CD8-positive, alpha-beta memory T cell (primary cell): ENCODE measurements at regions of chr20 and their contacts with region 1.

Region 1: DNA sequence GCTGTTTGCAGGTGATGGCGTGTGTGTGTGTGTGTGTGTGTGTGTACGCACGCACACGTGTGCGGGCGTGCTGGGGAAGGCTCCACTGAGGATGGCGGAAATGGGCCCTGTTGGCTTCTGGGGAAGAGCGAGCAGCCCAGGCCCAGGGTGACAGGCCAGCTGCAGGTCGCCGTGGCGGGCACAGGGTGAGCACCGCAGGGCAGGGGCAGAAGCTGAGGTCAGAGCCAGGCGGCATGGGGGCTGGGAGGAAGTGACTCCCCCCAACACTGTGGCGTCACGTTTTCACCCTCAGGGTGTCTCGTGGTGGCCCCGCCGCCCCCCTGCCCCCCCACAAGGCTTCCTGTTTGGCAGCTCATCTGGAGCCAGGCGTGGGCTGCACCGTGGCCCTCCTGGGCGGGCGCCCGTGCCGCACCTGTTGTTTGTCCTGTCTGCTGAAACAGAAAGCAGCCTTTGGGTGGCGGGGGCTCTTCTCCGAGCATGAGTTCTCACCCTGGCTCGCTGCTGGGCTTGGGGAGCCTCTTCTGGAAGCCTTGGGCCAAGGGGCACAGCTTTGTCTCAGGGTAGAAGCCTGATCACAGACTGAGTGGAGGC is 7.1 kb downstream of the RBM38 start:
- DNase-seq: peak; percentile 86 to 97 (median 96)
- H3K4me3 ChIP-seq: peak overlapping the region; percentile 56
- H3K4me3 Mint-ChIP-seq: peak overlapping the region; percentile 75 to 91 (median 86)
- H3K27ac ChIP-seq: peak overlapping the region; percentile 76
- H3K27ac Mint-ChIP-seq: peak overlapping the region; percentile 95 to 100 (median 98)
- H3K4me1 ChIP-seq: peaks cover 98% of the 10 kb centered on the region
- H3K4me1 Mint-ChIP-seq: peaks cover 84 to 99% (median 87%) of the 10 kb centered on the region in 3 donors
- H3K27me3 ChIP-seq: no peaks in the 10 kb centered on the region
- H3K27me3 Mint-ChIP-seq: peaks cover 0 to 23% of the 10 kb centered on the region in 2 donors

Region 2: DNA sequence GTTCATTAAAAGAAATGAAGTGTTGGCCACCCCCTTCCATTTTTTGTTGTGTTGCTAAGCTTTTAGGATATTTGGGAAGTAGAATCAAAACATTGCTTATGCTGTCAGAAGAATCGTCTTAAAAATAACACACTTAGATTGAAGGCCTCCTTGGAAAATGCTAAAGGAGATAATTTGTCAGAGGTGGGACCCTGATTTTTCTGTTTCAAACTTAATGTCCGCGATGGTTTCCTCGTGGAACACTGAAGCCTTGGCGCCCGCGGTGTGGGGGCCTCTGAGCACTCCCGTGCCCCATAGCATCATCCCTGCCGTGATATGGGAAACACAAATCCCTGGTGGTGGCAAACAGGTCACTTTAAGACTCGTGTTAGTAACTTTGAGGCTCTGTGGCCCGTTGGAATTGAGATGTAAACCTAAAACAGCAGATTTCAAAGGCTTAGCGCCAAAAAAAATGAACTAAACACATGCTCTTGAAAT is 16.3 kb before region 1 on chr20:
- CTCF ChIA-PET with region 1: interaction called, 46 read pairs
- POLR2A ChIA-PET with region 1: interaction called, 4 read pairs
- DNase-seq: no peak
- H3K4me3 ChIP-seq: no peak overlapping the region
- H3K4me3 Mint-ChIP-seq: peak overlapping the region in 1 of 7 donors; percentile 62
- H3K27ac ChIP-seq: no peak overlapping the region
- H3K27ac Mint-ChIP-seq: peak overlapping the region; percentile 31 to 83 (median 61)
- H3K4me1 ChIP-seq: peaks cover 11% of the 10 kb centered on the region
- H3K4me1 Mint-ChIP-seq: peaks cover 24 to 44% (median 38%) of the 10 kb centered on the region in 3 donors
- H3K27me3 ChIP-seq: no peaks in the 10 kb centered on the region
- H3K27me3 Mint-ChIP-seq: no peaks in the 10 kb centered on the region

Region 3: GRCh38 chr20:57412347-57413029 is 14.2 kb after region 1 on chr20:
- CTCF ChIA-PET with region 1: interaction called, 10 read pairs
- POLR2A ChIA-PET with region 1: interaction called, 6 read pairs
- DNase-seq: peak in 1 of 5 donors; percentile 32
- H3K4me3 ChIP-seq: no peak overlapping the region
- H3K4me3 Mint-ChIP-seq: no peak overlapping the region
- H3K27ac ChIP-seq: peak overlapping the region; percentile 13
- H3K27ac Mint-ChIP-seq: peak overlapping the region in 7 of 8 donors; percentile 24 to 93 (median 68)
- H3K4me1 ChIP-seq: peaks cover 19% of the 10 kb centered on the region
- H3K4me1 Mint-ChIP-seq: peaks cover 16 to 41% (median 23%) of the 10 kb centered on the region in 3 donors
- H3K27me3 ChIP-seq: no peaks in the 10 kb centered on the region
- H3K27me3 Mint-ChIP-seq: peaks cover 0 to 6% of the 10 kb centered on the region in 2 donors

Region 4: DNA sequence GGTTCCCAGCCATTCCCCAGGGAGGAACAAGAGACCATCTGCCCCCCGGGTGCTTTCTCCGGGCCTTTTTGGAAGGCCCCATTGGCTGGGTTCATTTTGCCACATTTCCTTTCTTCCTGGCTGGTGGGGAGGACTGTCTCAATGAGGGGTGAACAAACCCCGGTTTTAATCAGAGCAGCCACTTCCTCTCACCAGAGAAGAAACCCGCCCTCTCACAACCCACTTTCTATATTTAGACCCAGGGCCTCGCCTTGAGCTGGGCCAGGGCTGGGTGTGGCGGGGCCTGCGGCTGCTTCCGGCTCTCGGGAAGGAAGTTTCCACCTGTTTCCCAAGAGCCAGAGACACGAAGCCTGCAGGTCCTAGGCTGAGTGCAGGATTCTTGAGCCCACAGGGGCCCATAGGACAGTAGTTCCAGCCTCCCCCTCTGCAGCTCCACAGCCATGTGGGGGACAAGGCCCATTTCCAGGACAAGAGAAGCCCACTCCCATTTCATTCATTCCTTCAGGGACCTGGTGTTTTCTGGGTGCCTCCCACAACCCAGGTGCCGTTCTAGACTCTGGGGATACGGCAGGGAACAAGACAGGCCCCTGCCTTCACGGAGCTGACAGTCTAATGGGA is 34.7 kb after region 1 on chr20:
- CTCF ChIA-PET with region 1: interaction called, 67 read pairs
- POLR2A ChIA-PET with region 1: interaction called, 20 read pairs
- DNase-seq: peak; percentile 45 to 81 (median 75)
- H3K4me3 ChIP-seq: peak overlapping the region; percentile 71
- H3K4me3 Mint-ChIP-seq: peak overlapping the region; percentile 24 to 89 (median 74)
- H3K27ac ChIP-seq: peak overlapping the region; percentile 66
- H3K27ac Mint-ChIP-seq: peak overlapping the region; percentile 81 to 97 (median 92)
- H3K4me1 ChIP-seq: peaks cover 62% of the 10 kb centered on the region
- H3K4me1 Mint-ChIP-seq: peaks cover 49 to 68% (median 64%) of the 10 kb centered on the region in 3 donors
- H3K27me3 ChIP-seq: no peaks in the 10 kb centered on the region
- H3K27me3 Mint-ChIP-seq: no peaks in the 10 kb centered on the region

Region 5: DNA sequence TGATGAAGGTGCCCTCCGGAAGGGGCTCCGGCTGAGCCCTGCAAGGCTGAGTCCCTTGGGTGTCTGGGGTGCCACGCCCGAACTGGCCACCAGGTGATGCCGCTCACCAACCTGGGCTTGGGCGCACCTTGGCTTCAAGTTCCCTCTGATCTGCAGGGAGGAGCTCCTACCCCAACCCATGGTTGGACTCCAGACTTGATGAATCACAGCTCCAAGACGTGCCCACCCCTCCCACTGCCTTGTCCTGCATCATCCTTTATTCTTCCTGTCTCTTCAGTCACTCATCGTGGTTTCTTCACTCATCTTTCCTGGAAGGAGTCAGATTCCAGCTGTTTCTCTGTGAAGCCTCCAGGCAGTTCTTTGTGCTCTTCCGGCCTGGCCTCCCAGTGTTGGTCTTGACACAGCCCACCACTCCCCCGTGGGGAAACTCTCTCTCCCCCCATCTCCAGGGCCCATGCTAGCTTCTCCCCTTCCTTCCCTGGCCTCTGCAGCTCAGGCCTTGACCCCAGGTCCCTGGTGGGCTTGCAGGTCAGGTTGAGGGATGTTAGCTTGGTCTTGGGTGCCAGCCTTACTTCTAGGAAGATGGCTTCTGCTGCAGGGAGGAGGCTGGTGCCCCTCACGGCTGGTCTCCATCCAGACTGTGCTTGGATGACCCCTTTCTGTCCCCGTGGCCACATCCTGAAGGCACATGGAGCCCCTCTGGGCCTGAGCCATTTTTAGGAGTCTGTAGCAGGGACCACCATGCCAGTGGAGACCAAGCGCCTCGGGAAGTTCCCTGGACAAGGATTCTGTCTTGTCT is 224.5 kb after region 1 on chr20:
- CTCF ChIA-PET with region 1: interaction called, 6 read pairs
- POLR2A ChIA-PET with region 1: interaction called, 16 read pairs
- DNase-seq: peak; percentile 48 to 79 (median 55)
- H3K4me3 ChIP-seq: no peak overlapping the region
- H3K4me3 Mint-ChIP-seq: peak overlapping the region in 5 of 7 donors; percentile 26 to 81 (median 69)
- H3K27ac ChIP-seq: no peak overlapping the region
- H3K27ac Mint-ChIP-seq: peak overlapping the region; percentile 46 to 94 (median 88)
- H3K4me1 ChIP-seq: peaks cover 72% of the 10 kb centered on the region
- H3K4me1 Mint-ChIP-seq: peaks cover 63 to 79% (median 75%) of the 10 kb centered on the region in 3 donors
- H3K27me3 ChIP-seq: no peaks in the 10 kb centered on the region
- H3K27me3 Mint-ChIP-seq: peaks cover 0 to 3% of the 10 kb centered on the region in 2 donors